T-cell (primary cell): ENCODE measurements at regions of chr5 and their contacts with region 1.

Region 1: DNA sequence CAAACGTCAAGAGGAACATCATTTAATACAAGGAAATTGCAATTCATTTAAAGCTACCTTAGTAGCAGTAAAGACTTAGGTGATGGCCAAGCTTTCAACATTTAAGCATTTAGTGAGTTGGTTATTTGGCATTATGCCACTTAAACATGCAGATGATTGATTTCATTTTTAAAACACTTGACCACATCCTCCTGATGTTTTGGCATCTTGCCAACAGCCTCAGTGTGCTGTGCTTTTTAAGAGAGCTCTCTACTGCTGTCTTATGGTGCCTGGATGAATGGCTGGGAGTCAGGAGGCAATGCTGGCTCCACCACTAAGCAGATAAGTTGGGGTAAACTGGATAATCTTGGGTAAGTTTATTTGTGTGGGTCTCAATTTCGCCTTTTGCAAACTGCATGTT is 364.5 kb downstream of the MAN2A1 start:
- DNase-seq: peak; percentile 26 to 95 (median 76)
- ATAC-seq: peak; percentile 89 to 94 (median 90)
- H3K4me3 ChIP-seq: no peak overlapping the region
- H3K4me3 Mint-ChIP-seq: peak overlapping the region; percentile 7 to 55 (median 32)
- H3K27ac ChIP-seq: peak overlapping the region; percentile 13
- H3K27ac Mint-ChIP-seq: peak overlapping the region; percentile 84 to 91
- H3K4me1 ChIP-seq: peaks cover 18 to 28% of the 10 kb centered on the region in 2 experiments
- H3K4me1 Mint-ChIP-seq: peaks cover 37 to 40% (median 39%) of the 10 kb centered on the region in 3 donors
- H3K27me3 ChIP-seq: no peaks in the 10 kb centered on the region
- H3K27me3 Mint-ChIP-seq: peaks cover 0 to 2% of the 10 kb centered on the region in 2 donors

Region 2: GRCh38 chr5:109688971-109689739 is 365.1 kb before region 1 on chr5:
- CTCF ChIA-PET with region 1: interaction called, 11 to 12 read pairs
- POLR2A ChIA-PET with region 1: interaction called in 1 of 2 experiments, 3 read pairs
- DNase-seq: peak; percentile 47 to 93 (median 70)
- ATAC-seq: peak; percentile 79 to 88 (median 81)
- H3K4me3 ChIP-seq: peak overlapping the region; percentile 95 to 97
- H3K4me3 Mint-ChIP-seq: peak overlapping the region; percentile 84 to 90 (median 85)
- H3K27ac ChIP-seq: peak overlapping the region; percentile 91
- H3K27ac Mint-ChIP-seq: peak overlapping the region; percentile 88 to 93
- H3K4me1 ChIP-seq: peaks cover 16 to 18% of the 10 kb centered on the region in 2 experiments
- H3K4me1 Mint-ChIP-seq: peaks cover 35 to 36% (median 36%) of the 10 kb centered on the region in 3 donors
- H3K27me3 ChIP-seq: no peaks in the 10 kb centered on the region
- H3K27me3 Mint-ChIP-seq: no peaks in the 10 kb centered on the region

Region 3: GRCh38 chr5:110475529-110475928 is 421.3 kb after region 1 on chr5:
- CTCF ChIA-PET with region 1: no interaction called
- POLR2A ChIA-PET with region 1: no interaction called
- DNase-seq: no peak
- ATAC-seq: no peak
- H3K4me3 ChIP-seq: no peak overlapping the region
- H3K4me3 Mint-ChIP-seq: no peak overlapping the region
- H3K27ac ChIP-seq: no peak overlapping the region
- H3K27ac Mint-ChIP-seq: no peak overlapping the region
- H3K4me1 ChIP-seq: no peaks in the 10 kb centered on the region
- H3K4me1 Mint-ChIP-seq: no peaks in the 10 kb centered on the region
- H3K27me3 ChIP-seq: no peaks in the 10 kb centered on the region
- H3K27me3 Mint-ChIP-seq: peaks cover 0 to 10% of the 10 kb centered on the region in 2 donors